ENCODE measurements at regions of chr18 and their contacts with region 1.

Region 1: GRCh38 chr18:42114310-42114943 is 159.4 kb downstream of the PIK3C3 start:
- DNase-seq: peak; percentile 76
- ATAC-seq: peak; percentile 86
- H3K4me3 Mint-ChIP-seq: no peak overlapping the region
- H3K27ac Mint-ChIP-seq: peak overlapping the region; percentile 65
- H3K4me1 Mint-ChIP-seq: peaks cover 12% of the 10 kb centered on the region
- H3K27me3 Mint-ChIP-seq: peaks cover 8% of the 10 kb centered on the region

Region 2: DNA sequence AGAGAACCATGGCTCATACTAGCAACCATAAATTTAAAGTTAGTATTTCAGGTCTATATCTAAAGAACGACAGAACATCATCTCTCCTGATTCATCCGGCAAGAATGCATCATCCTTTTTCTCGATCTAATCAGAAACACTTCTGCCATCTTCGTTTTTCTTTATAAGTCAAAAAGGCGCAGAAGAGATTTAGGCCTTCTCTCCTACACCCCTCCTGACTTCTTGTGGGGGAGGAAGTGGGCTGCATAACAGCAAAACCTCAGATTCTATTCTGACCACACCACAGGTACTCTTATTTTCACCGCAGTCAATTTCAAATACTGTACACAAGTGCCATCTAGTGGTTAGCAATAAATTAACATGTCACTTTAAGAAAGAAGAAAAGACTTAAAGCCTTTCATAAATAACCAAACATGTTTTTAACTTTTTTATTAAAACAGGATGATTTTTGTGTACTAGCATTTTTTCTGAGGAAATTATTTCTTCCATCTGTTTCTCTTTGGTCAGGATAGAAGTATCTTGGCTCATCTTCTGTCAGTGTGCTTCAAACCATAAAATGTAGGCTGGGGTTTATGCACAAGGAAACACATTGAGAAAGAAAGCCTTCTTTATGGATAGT is 207.8 kb before region 1 on chr18:
- CTCF ChIA-PET with region 1: no interaction called
- POLR2A ChIA-PET with region 1: no interaction called
- DNase-seq: peak; percentile 68
- ATAC-seq: peak; percentile 90
- H3K4me3 Mint-ChIP-seq: no peak overlapping the region
- H3K27ac Mint-ChIP-seq: no peak overlapping the region
- H3K4me1 Mint-ChIP-seq: peaks cover 10% of the 10 kb centered on the region
- H3K27me3 Mint-ChIP-seq: peaks cover 11% of the 10 kb centered on the region

Region 3: DNA sequence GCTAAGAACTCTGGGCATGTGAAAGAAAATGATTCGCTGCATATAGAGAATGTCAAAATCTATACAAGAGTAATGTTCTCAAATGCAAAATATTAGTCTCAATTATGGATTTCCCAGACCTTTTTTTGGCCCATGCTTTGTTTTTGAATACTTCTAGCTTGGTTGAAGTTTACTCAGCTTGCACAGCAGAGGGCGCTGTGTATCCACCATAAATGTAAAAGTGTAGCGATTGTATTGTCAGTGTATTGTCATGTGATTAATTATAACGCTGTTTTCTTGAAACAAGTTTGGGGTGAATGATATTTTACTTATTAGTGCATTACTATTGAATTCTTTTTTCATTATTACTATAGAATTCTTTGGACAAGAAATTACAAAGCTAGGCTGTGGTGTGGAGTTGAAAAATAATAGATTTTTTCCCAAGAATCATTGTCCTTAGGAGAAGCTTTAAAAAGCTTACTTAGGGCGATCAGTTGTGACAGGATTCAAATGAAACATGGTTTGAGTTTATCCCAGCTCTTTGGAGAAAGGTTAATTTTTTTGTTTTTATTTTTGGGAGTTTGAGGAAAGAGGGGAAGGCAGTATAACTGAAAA is 61.1 kb before region 1 on chr18:
- CTCF ChIA-PET with region 1: interaction called, 33 read pairs
- POLR2A ChIA-PET with region 1: no interaction called
- DNase-seq: peak; percentile 72
- ATAC-seq: peak; percentile 79
- H3K4me3 Mint-ChIP-seq: no peak overlapping the region
- H3K27ac Mint-ChIP-seq: no peak overlapping the region
- H3K4me1 Mint-ChIP-seq: peaks cover 4% of the 10 kb centered on the region
- H3K27me3 Mint-ChIP-seq: no peaks in the 10 kb centered on the region

Region 4: DNA sequence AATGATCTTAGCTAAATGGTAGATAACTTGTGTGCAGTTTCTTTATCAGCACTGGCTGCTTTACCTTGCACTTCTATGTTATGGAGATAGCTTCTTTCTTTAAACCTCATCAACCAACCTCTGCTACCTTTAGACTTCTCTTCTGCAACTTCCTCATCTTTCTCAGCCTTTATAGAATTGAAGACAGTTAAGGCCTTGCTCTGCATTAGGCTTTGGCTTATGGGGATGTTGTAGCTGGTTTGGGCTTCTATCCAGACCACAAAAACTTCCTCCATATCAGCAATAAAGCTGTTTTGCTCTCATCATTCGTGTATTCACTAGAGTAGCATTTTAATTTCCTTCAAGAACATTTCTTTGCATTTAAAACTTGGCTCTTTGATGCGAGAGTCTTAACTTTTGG is 35.7 kb before region 1 on chr18:
- CTCF ChIA-PET with region 1: interaction called, 16 read pairs
- POLR2A ChIA-PET with region 1: no interaction called
- DNase-seq: no peak
- ATAC-seq: no peak
- H3K4me3 Mint-ChIP-seq: no peak overlapping the region
- H3K27ac Mint-ChIP-seq: no peak overlapping the region
- H3K4me1 Mint-ChIP-seq: peaks cover 12% of the 10 kb centered on the region
- H3K27me3 Mint-ChIP-seq: no peaks in the 10 kb centered on the region

Region 5: GRCh38 chr18:42131066-42131929 is 16.9 kb after region 1 on chr18:
- CTCF ChIA-PET with region 1: interaction called, 26 read pairs
- POLR2A ChIA-PET with region 1: no interaction called
- DNase-seq: no peak
- ATAC-seq: no peak
- H3K4me3 Mint-ChIP-seq: no peak overlapping the region
- H3K27ac Mint-ChIP-seq: no peak overlapping the region
- H3K4me1 Mint-ChIP-seq: no peaks in the 10 kb centered on the region
- H3K27me3 Mint-ChIP-seq: peaks cover 8% of the 10 kb centered on the region

Region 6: GRCh38 chr18:42298759-42299675 is 184.6 kb after region 1 on chr18:
- CTCF ChIA-PET with region 1: interaction called, 14 read pairs
- POLR2A ChIA-PET with region 1: no interaction called
- DNase-seq: peak; percentile 70
- ATAC-seq: peak; percentile 55
- H3K4me3 Mint-ChIP-seq: no peak overlapping the region
- H3K27ac Mint-ChIP-seq: no peak overlapping the region
- H3K4me1 Mint-ChIP-seq: no peaks in the 10 kb centered on the region
- H3K27me3 Mint-ChIP-seq: no peaks in the 10 kb centered on the region

Region 7: DNA sequence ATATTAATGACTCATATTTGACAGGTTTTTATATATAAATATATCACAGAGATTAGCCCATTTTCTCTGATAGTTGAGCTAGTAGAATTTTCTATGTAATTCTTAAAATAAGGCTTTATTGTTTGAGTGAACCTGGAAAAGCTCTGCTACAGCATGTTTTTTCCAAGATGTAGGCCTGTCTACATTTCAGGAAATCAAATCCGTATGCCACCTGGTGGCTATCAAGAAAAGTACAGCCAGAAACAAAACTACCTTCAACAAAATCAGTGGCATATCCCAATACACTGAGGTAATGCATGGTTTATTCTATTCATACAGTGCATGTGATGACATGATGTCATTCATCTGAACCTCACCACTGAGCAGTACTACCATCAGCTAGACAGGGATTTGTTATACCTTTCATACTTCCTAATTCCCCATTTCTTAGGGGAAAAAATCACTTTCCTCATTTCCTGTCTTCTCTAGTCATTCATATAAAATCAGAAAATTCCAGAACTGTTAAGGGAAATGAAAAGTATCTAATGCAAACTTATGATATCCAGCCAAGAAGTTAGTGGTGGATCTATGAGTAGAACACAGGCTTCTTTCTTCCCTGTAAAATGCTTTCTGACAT is 1473.2 kb after region 1 on chr18:
- CTCF ChIA-PET with region 1: interaction called, 11 read pairs
- POLR2A ChIA-PET with region 1: no interaction called
- DNase-seq: no peak
- ATAC-seq: no peak
- H3K4me3 Mint-ChIP-seq: no peak overlapping the region
- H3K27ac Mint-ChIP-seq: no peak overlapping the region
- H3K4me1 Mint-ChIP-seq: no peaks in the 10 kb centered on the region
- H3K27me3 Mint-ChIP-seq: no peaks in the 10 kb centered on the region

Measured in activated CD8-positive, alpha-beta T cell treated with anti-CD3 and anti-CD28 coated beads, Interleukin-2, amount 10 ng/mL, durations not matched to agents 7 days and 5 days (primary cell).